Thyroid gland (tissue), 4 donors: ENCODE measurements at regions of chr14 and their contacts with region 1.

Region 1: DNA sequence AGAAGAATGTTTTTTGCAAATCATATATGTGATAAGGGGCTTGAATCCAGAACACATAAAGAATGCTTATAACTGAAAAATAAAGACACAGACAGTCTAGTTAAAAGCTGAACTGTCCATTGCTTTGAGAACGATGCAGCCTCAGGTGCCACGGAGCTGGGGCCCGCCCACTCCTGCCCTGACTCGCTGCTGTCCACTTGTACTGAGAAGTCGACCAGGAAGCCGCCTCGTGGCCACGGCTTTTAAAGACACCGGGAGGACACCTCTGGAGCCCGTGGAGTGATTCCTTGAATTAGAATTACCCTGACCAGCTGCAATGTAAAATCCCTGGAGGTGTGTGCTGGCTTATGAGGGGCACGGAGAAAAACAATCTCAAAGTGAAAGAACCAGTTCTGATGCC is 24.0 kb upstream of the TEX22 start:
- DNase-seq: peak; percentile 73 to 76
- H3K4me3 ChIP-seq: no peak overlapping the region
- H3K27ac ChIP-seq: no peak overlapping the region
- H3K4me1 ChIP-seq: peaks cover 0 to 5% of the 10 kb centered on the region in 2 donors
- H3K27me3 ChIP-seq: no peaks in the 10 kb centered on the region
- CTCF ChIP-seq: peak in 2 of 6 experiments; percentile 26 to 28
- POLR2A ChIP-seq: no peak

Region 2: GRCh38 chr14:105527661-105528581 is 153.5 kb after region 1 on chr14:
- intact Hi-C with region 1: loop called (anchors 5 kb)
- DNase-seq: peak; percentile 74 to 78
- H3K4me3 ChIP-seq: peak overlapping the region; percentile 42 to 85 (median 69)
- H3K27ac ChIP-seq: peak overlapping the region in 2 of 3 donors; percentile 32 to 73
- H3K4me1 ChIP-seq: peaks cover 15 to 24% of the 10 kb centered on the region in 2 donors
- H3K27me3 ChIP-seq: no peaks in the 10 kb centered on the region
- CTCF ChIP-seq: peak; percentile 44 to 95 (median 81)
- POLR2A ChIP-seq: peak in 1 of 2 donors; percentile 45